ENCODE measurements at regions of chr22 and their contacts with region 1.

Region 1: GRCh38 chr22:40323681-40324171 is 22.6 kb upstream of the ADSL start:
- DNase-seq: no peak
- ATAC-seq: no peak
- H3K4me3 ChIP-seq: no peak overlapping the region
- H3K27ac ChIP-seq: peak overlapping the region in 2 of 12 donors; percentile 35 to 73
- H3K4me1 ChIP-seq: peaks cover 0 to 19% (median 4%) of the 10 kb centered on the region in 12 donors
- H3K27me3 ChIP-seq: no peaks in the 10 kb centered on the region
- CTCF ChIP-seq: no peak
- POLR2A ChIP-seq: no peak

Region 2: GRCh38 chr22:39634671-39635405 is 688.9 kb before region 1 on chr22:
- intact Hi-C with region 1: no loop called
- DNase-seq: no peak
- ATAC-seq: no peak
- H3K4me3 ChIP-seq: no peak overlapping the region
- H3K27ac ChIP-seq: no peak overlapping the region
- H3K4me1 ChIP-seq: no peaks in the 10 kb centered on the region
- H3K27me3 ChIP-seq: peaks cover 0 to 16% (median 0%) of the 10 kb centered on the region in 9 donors
- CTCF ChIP-seq: no peak
- POLR2A ChIP-seq: no peak

Region 3: GRCh38 chr22:40147388-40148176 is 176.1 kb before region 1 on chr22:
- intact Hi-C with region 1: no loop called
- DNase-seq: no peak
- ATAC-seq: no peak
- H3K4me3 ChIP-seq: no peak overlapping the region
- H3K27ac ChIP-seq: no peak overlapping the region
- H3K4me1 ChIP-seq: no peaks in the 10 kb centered on the region
- H3K27me3 ChIP-seq: no peaks in the 10 kb centered on the region
- CTCF ChIP-seq: no peak
- POLR2A ChIP-seq: no peak

Region 4: GRCh38 chr22:40289991-40290459 is 33.7 kb before region 1 on chr22:
- intact Hi-C with region 1: loop called in 2 of 10 experiments (anchors 2 to 5 kb)
- DNase-seq: peak in 3 of 5 donors; percentile 28 to 62 (median 48)
- ATAC-seq: peak; percentile 24 to 82 (median 66)
- H3K4me3 ChIP-seq: peak overlapping the region in 1 of 12 donors; percentile 5
- H3K27ac ChIP-seq: peak overlapping the region in 3 of 12 donors; percentile 8 to 84 (median 20)
- H3K4me1 ChIP-seq: peaks cover 0 to 20% (median 0%) of the 10 kb centered on the region in 12 donors
- H3K27me3 ChIP-seq: no peaks in the 10 kb centered on the region
- CTCF ChIP-seq: no peak
- POLR2A ChIP-seq: no peak

Measured in heart left ventricle (tissue), 16 donors.